GM12878 (cell line): ENCODE measurements at regions of chr20 and their contacts with region 1.

Region 1: GRCh38 chr20:36835453-36836198 is 40.3 kb upstream of the TLDC2 start:
- DNase-seq: peak; percentile 87
- ATAC-seq: peak; percentile 95
- H3K4me3 ChIP-seq: peak overlapping the region; percentile 63
- H3K27ac ChIP-seq: peak overlapping the region; percentile 90
- H3K4me1 ChIP-seq: peaks cover 17% of the 10 kb centered on the region
- H3K27me3 ChIP-seq: no peaks in the 10 kb centered on the region
- CTCF ChIP-seq: no peak
- EP300 ChIP-seq: no peak
- POLR2A ChIP-seq: peak; percentile 71; the same call in 1 of the 2 replicates
- RAD21 ChIP-seq: no peak

Region 2: GRCh38 chr20:36384022-36384619 is 451.5 kb before region 1 on chr20:
- CTCF ChIA-PET with region 1: no interaction called
- POLR2A ChIA-PET with region 1: no interaction called
- RAD21 ChIA-PET with region 1: no interaction called
- SMC1A ChIA-PET with region 1: no interaction called
- in situ Hi-C with region 1: no loop called
- intact Hi-C with region 1: no loop called
- DNase-seq: no peak
- ATAC-seq: peak; percentile 72
- H3K4me3 ChIP-seq: no peak overlapping the region
- H3K27ac ChIP-seq: no peak overlapping the region
- H3K4me1 ChIP-seq: no peaks in the 10 kb centered on the region
- H3K27me3 ChIP-seq: no peaks in the 10 kb centered on the region
- CTCF ChIP-seq: peak in 2 of 3 experiments; percentile 15 to 17; a peak in 2 of 6 replicates
- EP300 ChIP-seq: no peak
- POLR2A ChIP-seq: no peak
- RAD21 ChIP-seq: no peak

Region 3: DNA sequence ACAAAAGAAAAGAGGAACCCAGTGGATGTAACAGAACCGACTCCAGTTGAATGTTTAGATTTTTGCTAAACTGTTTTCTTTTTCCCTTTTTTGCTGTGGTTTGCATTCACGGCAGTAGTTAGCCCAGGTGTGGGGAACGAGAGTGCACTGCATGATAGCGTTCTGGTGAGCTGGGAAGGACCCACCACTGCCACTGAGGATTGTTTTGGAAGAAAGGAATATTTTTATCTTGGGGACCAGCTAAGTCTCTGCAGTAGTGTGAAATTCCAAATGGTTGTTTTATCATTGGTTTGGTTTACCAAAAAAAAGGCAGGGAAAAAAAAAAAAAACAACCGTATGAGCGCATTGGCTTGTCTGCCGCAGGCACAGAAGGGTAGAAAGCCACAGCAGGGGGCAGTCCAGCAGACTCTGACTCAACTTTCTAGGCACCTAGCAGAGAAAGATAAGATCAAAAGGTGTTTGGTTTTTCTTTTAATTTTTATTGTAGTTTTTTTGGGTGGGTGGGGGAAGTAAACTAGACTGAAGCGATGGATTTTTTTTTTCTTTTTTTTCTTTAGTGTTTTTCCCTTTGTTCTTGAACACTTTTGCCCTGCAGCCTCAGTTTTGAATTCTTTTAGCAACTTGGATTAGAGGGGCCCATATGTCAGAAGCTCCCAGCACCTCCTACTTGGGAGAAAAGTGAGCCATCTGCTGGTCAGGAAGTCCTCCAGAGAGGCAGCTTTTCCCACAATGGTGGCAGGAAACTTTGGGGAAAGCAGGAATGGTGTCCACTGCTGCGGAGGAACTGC is 243.6 kb before region 1 on chr20:
- CTCF ChIA-PET with region 1: interaction called, 3 read pairs
- POLR2A ChIA-PET with region 1: interaction called, 3 read pairs
- RAD21 ChIA-PET with region 1: interaction called, 23 read pairs
- SMC1A ChIA-PET with region 1: no interaction called
- in situ Hi-C with region 1: no loop called
- intact Hi-C with region 1: no loop called
- DNase-seq: no peak
- ATAC-seq: no peak
- H3K4me3 ChIP-seq: no peak overlapping the region
- H3K27ac ChIP-seq: no peak overlapping the region
- H3K4me1 ChIP-seq: peaks cover 41% of the 10 kb centered on the region
- H3K27me3 ChIP-seq: no peaks in the 10 kb centered on the region
- CTCF ChIP-seq: peak in 2 of 3 experiments; percentile 23 to 43; a peak in 3 of 6 replicates
- EP300 ChIP-seq: no peak
- POLR2A ChIP-seq: no peak
- RAD21 ChIP-seq: no peak

Region 4: GRCh38 chr20:36745927-36746659 is 89.5 kb before region 1 on chr20 and contains the start of gene NDRG3:
- CTCF ChIA-PET with region 1: interaction called, 3 read pairs
- POLR2A ChIA-PET with region 1: interaction called, 4 read pairs
- RAD21 ChIA-PET with region 1: interaction called, 11 read pairs
- SMC1A ChIA-PET with region 1: interaction called, 4 read pairs
- in situ Hi-C with region 1: no loop called
- intact Hi-C with region 1: no loop called
- DNase-seq: peak; percentile 68
- ATAC-seq: peak; percentile 99
- H3K4me3 ChIP-seq: peak within 1 kb of the TSS; percentile 94
- H3K27ac ChIP-seq: peak within 1 kb of the TSS; percentile 74; the same call in 1 of the 2 replicates
- H3K4me1 ChIP-seq: no peaks in the 10 kb centered on the region
- H3K27me3 ChIP-seq: no peaks in the 10 kb centered on the region
- CTCF ChIP-seq: peak in 1 of 3 experiments; percentile 10; a peak in 2 of 6 replicates
- EP300 ChIP-seq: no peak
- POLR2A ChIP-seq: peak; percentile 63
- RAD21 ChIP-seq: no peak
- polyA plus RNA-seq, gene NDRG3: 11.2 to 12.7 TPM

Region 5: GRCh38 chr20:36773597-36774390 is 61.8 kb before region 1 on chr20 and contains the start of gene DSN1:
- CTCF ChIA-PET with region 1: interaction called, 11 read pairs
- POLR2A ChIA-PET with region 1: interaction called, 3 read pairs
- RAD21 ChIA-PET with region 1: interaction called, 8 read pairs
- SMC1A ChIA-PET with region 1: interaction called, 3 read pairs
- in situ Hi-C with region 1: no loop called
- intact Hi-C with region 1: no loop called
- DNase-seq: peak; percentile 92
- ATAC-seq: peak; percentile 92
- H3K4me3 ChIP-seq: peak within 1 kb of the TSS; percentile 93
- H3K27ac ChIP-seq: peak within 1 kb of the TSS; percentile 94
- H3K4me1 ChIP-seq: peaks cover 35% of the 10 kb centered on the region
- H3K27me3 ChIP-seq: no peaks in the 10 kb centered on the region
- CTCF ChIP-seq: peak in 2 of 3 experiments; percentile 43 to 59; a peak in 3 of 6 replicates
- EP300 ChIP-seq: no peak
- POLR2A ChIP-seq: peak; percentile 85; the same call in 1 of the 2 replicates
- RAD21 ChIP-seq: 0 out of 2 replicates have a peak, but pooled peaks have one; percentile 29
- polyA plus RNA-seq, gene DSN1: 21.2 to 21.4 TPM

Region 6: DNA sequence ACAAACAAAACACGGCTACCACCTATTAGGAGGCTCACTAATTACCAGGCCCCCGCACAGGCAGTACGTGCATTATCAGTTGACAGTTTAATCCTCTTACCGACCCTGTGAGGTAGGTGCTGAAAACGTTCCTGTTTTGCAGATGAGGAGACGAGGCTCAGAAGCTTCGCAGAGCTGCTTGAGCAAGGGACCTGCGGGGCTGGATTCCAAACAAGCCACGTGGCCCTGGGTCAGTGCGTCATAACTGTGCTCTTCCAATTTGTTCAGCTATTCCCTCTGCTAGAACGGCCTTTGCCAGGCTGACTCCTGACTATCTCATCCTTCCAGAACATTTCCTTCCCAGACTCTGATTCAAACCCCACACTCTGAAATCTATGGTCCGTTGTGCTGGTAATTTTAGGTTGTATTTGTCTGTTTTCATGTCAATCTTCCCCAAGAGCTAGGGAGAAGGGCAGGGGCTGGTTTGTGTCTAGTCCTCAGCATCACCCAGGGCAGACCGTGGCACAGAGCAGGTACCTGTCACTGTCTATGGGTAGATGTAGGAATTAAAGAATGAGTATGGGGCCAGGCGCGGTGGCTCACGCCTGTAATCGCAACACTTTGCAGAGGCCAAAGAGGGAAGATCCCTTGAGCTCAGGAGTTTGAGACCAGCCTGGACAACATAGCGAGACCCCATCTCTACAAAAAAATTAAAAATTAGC is 11.5 kb after region 1 on chr20:
- CTCF ChIA-PET with region 1: interaction called, 349 read pairs
- POLR2A ChIA-PET with region 1: interaction called, 69 read pairs
- RAD21 ChIA-PET with region 1: interaction called, 48 read pairs
- SMC1A ChIA-PET with region 1: interaction called, 41 read pairs
- in situ Hi-C with region 1: no loop called
- intact Hi-C with region 1: no loop called
- DNase-seq: no peak
- ATAC-seq: no peak
- H3K4me3 ChIP-seq: no peak overlapping the region
- H3K27ac ChIP-seq: no peak overlapping the region
- H3K4me1 ChIP-seq: peaks cover 80% of the 10 kb centered on the region
- H3K27me3 ChIP-seq: no peaks in the 10 kb centered on the region
- CTCF ChIP-seq: no peak
- EP300 ChIP-seq: no peak
- POLR2A ChIP-seq: no peak
- RAD21 ChIP-seq: no peak

Region 7: GRCh38 chr20:36861875-36862801 is 26.5 kb after region 1 on chr20:
- CTCF ChIA-PET with region 1: interaction called, 349 read pairs
- POLR2A ChIA-PET with region 1: interaction called, 114 read pairs
- RAD21 ChIA-PET with region 1: interaction called, 215 read pairs
- SMC1A ChIA-PET with region 1: interaction called, 51 read pairs
- in situ Hi-C with region 1: no loop called
- intact Hi-C with region 1: loop called (anchors 1 kb)
- DNase-seq: no peak
- ATAC-seq: no peak
- H3K4me3 ChIP-seq: peak overlapping the region; percentile 80
- H3K27ac ChIP-seq: no peak overlapping the region
- H3K4me1 ChIP-seq: peaks cover 26% of the 10 kb centered on the region
- H3K27me3 ChIP-seq: no peaks in the 10 kb centered on the region
- CTCF ChIP-seq: no peak
- EP300 ChIP-seq: no peak
- POLR2A ChIP-seq: no peak
- RAD21 ChIP-seq: no peak

Region 8: DNA sequence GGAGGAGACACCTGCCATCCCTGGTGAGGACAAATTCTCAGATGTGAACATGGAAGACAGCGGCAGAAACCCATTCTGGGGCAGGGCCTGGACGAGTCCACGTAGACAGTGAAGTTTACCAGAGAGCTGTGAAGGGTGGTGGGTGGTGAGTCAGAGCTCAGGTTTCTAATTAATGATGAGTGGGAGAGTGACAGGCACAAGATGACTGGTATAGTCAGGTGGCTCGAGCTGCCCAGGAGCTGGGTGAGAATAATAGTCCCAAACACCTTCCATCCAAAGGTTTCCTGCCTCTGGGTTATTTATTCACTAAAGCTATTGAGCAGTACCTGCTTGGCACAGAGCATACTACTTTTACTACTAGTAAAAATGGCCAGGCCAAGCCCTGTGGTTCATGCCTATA is 46.3 kb after region 1 on chr20:
- CTCF ChIA-PET with region 1: interaction called, 82 read pairs
- POLR2A ChIA-PET with region 1: interaction called, 41 read pairs
- RAD21 ChIA-PET with region 1: interaction called, 83 read pairs
- SMC1A ChIA-PET with region 1: interaction called, 51 read pairs
- in situ Hi-C with region 1: no loop called
- intact Hi-C with region 1: loop called (anchors 1 kb)
- DNase-seq: no peak
- ATAC-seq: peak; percentile 93
- H3K4me3 ChIP-seq: no peak overlapping the region
- H3K27ac ChIP-seq: no peak overlapping the region
- H3K4me1 ChIP-seq: peaks cover 7% of the 10 kb centered on the region
- H3K27me3 ChIP-seq: no peaks in the 10 kb centered on the region; a peak in 1 of 4 replicates
- CTCF ChIP-seq: no peak
- EP300 ChIP-seq: no peak
- POLR2A ChIP-seq: no peak
- RAD21 ChIP-seq: no peak